PC-9 (cell line): ENCODE measurements at regions of chr2 and their contacts with region 1.

Region 1: GRCh38 chr2:177998006-177998405 is 74.6 kb downstream of the PDE11A start:
- DNase-seq: no peak
- H3K4me3 ChIP-seq: no peak overlapping the region
- H3K27ac ChIP-seq: no peak overlapping the region
- H3K4me1 ChIP-seq: no peaks in the 10 kb centered on the region
- H3K27me3 ChIP-seq: no peaks in the 10 kb centered on the region
- CTCF ChIP-seq: no peak

Region 2: GRCh38 chr2:176206682-176207081 is 1791.3 kb before region 1 on chr2:
- CTCF ChIA-PET with region 1: no interaction called
- POLR2A ChIA-PET with region 1: interaction called, 14 read pairs
- intact Hi-C with region 1: no loop called
- DNase-seq: no peak
- H3K4me3 ChIP-seq: no peak overlapping the region
- H3K27ac ChIP-seq: no peak overlapping the region
- H3K4me1 ChIP-seq: no peaks in the 10 kb centered on the region
- H3K27me3 ChIP-seq: peaks cover 19% of the 10 kb centered on the region
- CTCF ChIP-seq: no peak

Region 3: GRCh38 chr2:177939211-177939610 is 58.8 kb before region 1 on chr2:
- CTCF ChIA-PET with region 1: no interaction called
- POLR2A ChIA-PET with region 1: no interaction called
- intact Hi-C with region 1: no loop called
- DNase-seq: no peak
- H3K4me3 ChIP-seq: no peak overlapping the region
- H3K27ac ChIP-seq: no peak overlapping the region
- H3K4me1 ChIP-seq: no peaks in the 10 kb centered on the region
- H3K27me3 ChIP-seq: no peaks in the 10 kb centered on the region
- CTCF ChIP-seq: no peak